ENCODE measurements at regions of chr1 and their contacts with region 1.

Region 1: DNA sequence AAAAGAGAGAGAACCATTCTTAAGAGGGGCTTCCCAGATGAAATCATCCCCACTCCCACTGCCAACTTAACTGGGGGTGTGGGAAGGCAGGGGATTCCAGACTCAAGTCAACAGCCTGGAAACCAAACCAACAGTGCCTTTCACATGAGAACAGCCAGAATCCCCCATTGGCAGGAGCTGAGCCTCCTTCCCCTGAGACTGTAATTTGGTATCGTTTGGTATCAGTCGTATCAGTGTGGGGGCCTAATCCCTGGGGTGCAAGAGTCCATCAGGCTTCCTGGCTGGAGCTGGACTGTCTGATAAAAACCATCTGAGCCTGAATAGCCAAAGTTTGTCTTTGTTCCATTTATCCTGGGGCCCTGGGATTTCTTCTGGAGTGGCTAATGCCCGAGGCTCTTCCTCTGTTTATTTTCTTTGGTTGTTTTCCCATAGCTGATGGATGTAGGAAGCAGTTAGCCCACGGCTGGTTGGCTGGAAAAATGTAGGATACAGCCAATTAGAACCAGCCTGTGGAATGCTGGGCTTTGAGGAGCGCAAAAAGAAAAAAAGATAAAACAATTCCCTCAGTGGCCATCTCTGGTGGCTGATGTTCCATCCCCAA is 84.6 kb downstream of the LAMC2 start:
- DNase-seq: peak; percentile 94
- H3K4me3 Mint-ChIP-seq: no peak overlapping the region
- H3K27ac Mint-ChIP-seq: peak overlapping the region; percentile 90
- H3K4me1 Mint-ChIP-seq: peaks cover 59% of the 10 kb centered on the region
- H3K27me3 Mint-ChIP-seq: no peaks in the 10 kb centered on the region
- CTCF ChIP-seq: no peak

Region 2: DNA sequence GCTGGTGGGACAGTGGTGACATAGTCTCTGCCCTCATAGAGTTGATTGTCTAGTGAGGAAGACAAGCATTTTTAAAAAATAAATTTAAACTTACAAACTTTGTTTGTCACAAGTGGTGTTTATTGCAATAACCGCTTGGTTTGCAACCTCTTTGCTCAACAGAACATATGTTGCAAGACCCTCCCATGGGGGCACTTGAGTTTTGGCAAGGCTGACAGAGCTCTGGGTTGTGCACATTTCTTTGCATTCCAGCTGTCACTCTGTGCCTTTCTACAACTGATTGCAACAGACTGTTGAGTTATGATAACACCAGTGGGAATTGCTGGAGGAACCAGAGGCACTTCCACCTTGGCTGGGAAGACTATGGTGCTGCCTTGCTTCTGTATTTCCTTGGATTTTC is 26.2 kb before region 1 on chr1:
- CTCF ChIA-PET with region 1: interaction called, 4 read pairs
- POLR2A ChIA-PET with region 1: interaction called, 32 read pairs
- intact Hi-C with region 1: no loop called
- DNase-seq: peak; percentile 91
- H3K4me3 Mint-ChIP-seq: no peak overlapping the region
- H3K27ac Mint-ChIP-seq: no peak overlapping the region
- H3K4me1 Mint-ChIP-seq: peaks cover 27% of the 10 kb centered on the region
- H3K27me3 Mint-ChIP-seq: no peaks in the 10 kb centered on the region
- CTCF ChIP-seq: no peak

Region 3: GRCh38 chr1:183259886-183260285 is 10.8 kb before region 1 on chr1:
- CTCF ChIA-PET with region 1: interaction called, 4 read pairs
- POLR2A ChIA-PET with region 1: interaction called, 12 read pairs
- intact Hi-C with region 1: no loop called
- DNase-seq: no peak
- H3K4me3 Mint-ChIP-seq: no peak overlapping the region
- H3K27ac Mint-ChIP-seq: no peak overlapping the region
- H3K4me1 Mint-ChIP-seq: no peaks in the 10 kb centered on the region
- H3K27me3 Mint-ChIP-seq: no peaks in the 10 kb centered on the region
- CTCF ChIP-seq: no peak

Region 4: GRCh38 chr1:183291802-183292514 is 21.3 kb after region 1 on chr1:
- CTCF ChIA-PET with region 1: no interaction called
- POLR2A ChIA-PET with region 1: no interaction called
- intact Hi-C with region 1: no loop called
- DNase-seq: no peak
- H3K4me3 Mint-ChIP-seq: no peak overlapping the region
- H3K27ac Mint-ChIP-seq: no peak overlapping the region
- H3K4me1 Mint-ChIP-seq: peaks cover 9% of the 10 kb centered on the region
- H3K27me3 Mint-ChIP-seq: no peaks in the 10 kb centered on the region
- CTCF ChIP-seq: no peak

Measured in MCF 10A (cell line).